Heart right ventricle (tissue), 16 donors: ENCODE measurements at regions of chr9 and their contacts with region 1.

Region 1: DNA sequence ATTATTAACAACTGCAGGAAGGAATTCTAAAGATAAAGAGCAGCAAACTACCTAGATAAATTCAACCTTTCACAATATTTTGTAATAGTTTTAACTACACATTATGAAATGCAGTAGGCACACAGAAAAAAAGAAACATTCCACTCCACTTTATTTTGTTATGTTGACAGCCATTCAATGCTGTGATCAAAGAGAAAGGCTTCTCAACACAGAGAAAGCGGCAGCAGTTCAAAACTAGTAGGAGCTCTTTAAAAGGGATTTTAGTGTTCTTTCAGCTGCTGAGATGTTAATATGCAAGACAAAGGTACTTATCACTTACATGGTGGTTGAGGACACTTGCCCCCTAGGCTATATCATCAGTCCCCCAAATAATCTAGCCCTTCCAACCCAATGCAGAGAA is 11.6 kb downstream of the CEMIP2 start:
- DNase-seq: no peak
- ATAC-seq: no peak
- H3K4me3 ChIP-seq: no peak overlapping the region
- H3K27ac ChIP-seq: no peak overlapping the region
- H3K4me1 ChIP-seq: peaks cover 0 to 51% (median 11%) of the 10 kb centered on the region in 9 donors
- H3K27me3 ChIP-seq: no peaks in the 10 kb centered on the region
- CTCF ChIP-seq: no peak

Region 2: DNA sequence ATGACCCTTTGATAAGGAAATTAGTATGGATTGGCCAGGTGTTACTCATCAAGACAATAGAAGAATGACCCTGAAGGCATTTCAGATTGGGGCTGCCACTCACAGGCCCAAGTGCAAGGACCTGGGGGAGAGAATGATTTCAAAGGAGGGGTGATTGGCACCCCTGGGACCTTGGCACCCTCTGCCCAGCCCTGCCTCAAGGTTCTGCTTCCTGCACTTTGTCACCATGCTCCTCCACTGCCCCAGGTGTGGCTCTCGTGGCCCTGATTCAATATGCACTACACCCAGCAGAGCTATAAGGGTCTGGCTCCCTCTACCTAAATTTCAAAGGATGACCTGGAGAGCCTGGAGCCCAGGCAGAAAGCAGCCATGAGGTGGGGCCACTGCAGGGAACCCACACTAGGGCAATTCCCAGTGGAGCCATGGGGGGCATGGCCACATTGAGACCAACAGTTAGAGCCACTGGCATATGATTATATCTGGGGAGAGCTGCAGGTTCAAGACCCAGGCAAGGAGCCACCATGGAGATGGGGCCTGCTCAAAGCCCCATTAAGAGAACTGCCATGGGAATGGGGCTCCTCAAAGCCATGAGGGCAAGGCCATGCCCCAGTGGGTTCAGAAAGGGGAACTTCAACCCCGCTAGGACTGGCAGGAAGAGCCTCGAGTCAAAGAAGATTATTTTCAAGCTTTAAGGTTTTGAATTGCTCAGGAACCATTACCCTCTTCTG is 81.5 kb before region 1 on chr9:
- intact Hi-C with region 1: no loop called
- DNase-seq: no peak
- ATAC-seq: no peak
- H3K4me3 ChIP-seq: no peak overlapping the region
- H3K27ac ChIP-seq: peak overlapping the region in 1 of 10 donors; percentile 59
- H3K4me1 ChIP-seq: peaks cover 0 to 65% (median 13%) of the 10 kb centered on the region in 9 donors
- H3K27me3 ChIP-seq: no peaks in the 10 kb centered on the region
- CTCF ChIP-seq: no peak

Region 3: DNA sequence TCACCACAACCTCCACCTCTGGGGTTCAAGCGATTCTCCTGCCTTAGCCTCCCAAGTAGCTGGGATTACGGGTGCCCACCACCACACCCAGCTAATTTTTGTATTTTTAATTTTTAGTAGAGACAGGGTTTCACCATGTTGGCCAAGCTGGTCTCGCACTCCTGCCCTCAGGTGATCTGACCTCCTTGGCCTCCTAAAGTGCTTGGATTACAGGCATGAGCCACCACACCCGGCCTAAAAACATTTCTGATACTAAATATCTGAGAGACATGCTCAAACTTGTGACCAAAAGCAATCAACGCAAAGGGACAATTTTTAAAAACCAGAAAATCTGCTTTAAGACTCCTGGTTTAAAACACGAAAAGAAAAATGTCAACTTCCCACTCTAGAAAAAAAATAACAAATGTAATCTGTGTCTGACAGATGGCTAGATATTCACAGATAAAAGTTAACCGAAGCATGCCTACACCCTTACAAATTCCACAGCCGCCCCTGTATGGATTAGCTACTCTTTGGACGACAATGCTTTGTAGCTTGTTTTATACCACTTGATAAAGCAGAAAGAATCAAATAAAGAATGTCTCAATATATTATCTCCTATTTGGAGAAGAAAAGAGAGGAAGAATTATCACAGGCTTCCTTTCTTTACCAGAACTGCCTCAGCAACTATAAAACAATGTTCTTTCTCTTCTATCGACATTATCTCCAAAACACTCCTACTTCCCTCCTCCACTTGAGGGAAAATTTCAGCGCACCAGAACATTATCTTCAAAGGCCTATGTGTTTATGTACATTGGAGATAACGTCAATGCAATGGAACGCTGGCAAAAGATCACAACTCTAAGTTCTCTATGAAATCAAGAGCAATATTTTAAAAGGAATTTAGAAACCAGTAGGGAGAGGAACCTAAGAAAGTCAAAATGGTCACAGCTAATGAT is 14.8 kb before region 1 on chr9:
- intact Hi-C with region 1: loop called in 1 of 10 experiments (anchors 2 kb)
- DNase-seq: no peak
- ATAC-seq: peak in 1 of 8 donors; percentile 34
- H3K4me3 ChIP-seq: no peak overlapping the region
- H3K27ac ChIP-seq: no peak overlapping the region
- H3K4me1 ChIP-seq: peaks cover 0 to 36% (median 0%) of the 10 kb centered on the region in 9 donors
- H3K27me3 ChIP-seq: no peaks in the 10 kb centered on the region
- CTCF ChIP-seq: no peak

Region 4: DNA sequence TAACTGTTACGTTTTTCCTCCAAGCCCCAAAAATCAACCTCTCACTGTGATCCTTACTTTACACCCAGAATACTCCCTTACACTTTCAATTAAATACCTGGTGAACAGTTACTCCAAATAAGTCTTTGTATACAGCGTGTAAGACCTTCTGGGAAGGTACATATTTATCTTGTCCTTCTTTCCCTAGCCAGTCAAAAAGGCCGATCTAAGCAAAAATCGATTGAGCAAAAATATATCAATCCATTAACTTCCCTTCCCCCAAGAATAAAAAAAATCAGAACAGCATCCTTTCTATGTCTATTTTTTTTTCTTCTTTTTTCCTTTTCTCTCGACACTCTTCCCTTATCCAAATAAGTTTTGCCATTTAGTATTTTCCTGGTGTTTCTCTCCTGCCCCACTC is 82.9 kb after region 1 on chr9:
- intact Hi-C with region 1: no loop called
- DNase-seq: no peak
- ATAC-seq: no peak
- H3K4me3 ChIP-seq: no peak overlapping the region
- H3K27ac ChIP-seq: no peak overlapping the region
- H3K4me1 ChIP-seq: no peaks in the 10 kb centered on the region
- H3K27me3 ChIP-seq: no peaks in the 10 kb centered on the region
- CTCF ChIP-seq: no peak

Region 5: GRCh38 chr9:71955300-71955915 is 198.7 kb after region 1 on chr9:
- intact Hi-C with region 1: no loop called
- DNase-seq: no peak
- ATAC-seq: peak in 1 of 8 donors; percentile 23
- H3K4me3 ChIP-seq: no peak overlapping the region
- H3K27ac ChIP-seq: no peak overlapping the region
- H3K4me1 ChIP-seq: peaks cover 0 to 14% (median 7%) of the 10 kb centered on the region in 9 donors
- H3K27me3 ChIP-seq: no peaks in the 10 kb centered on the region
- CTCF ChIP-seq: no peak